Dorsolateral prefrontal cortex (tissue), 120 donors: ENCODE measurements at regions of chr2 and their contacts with region 1.

Region 1: DNA sequence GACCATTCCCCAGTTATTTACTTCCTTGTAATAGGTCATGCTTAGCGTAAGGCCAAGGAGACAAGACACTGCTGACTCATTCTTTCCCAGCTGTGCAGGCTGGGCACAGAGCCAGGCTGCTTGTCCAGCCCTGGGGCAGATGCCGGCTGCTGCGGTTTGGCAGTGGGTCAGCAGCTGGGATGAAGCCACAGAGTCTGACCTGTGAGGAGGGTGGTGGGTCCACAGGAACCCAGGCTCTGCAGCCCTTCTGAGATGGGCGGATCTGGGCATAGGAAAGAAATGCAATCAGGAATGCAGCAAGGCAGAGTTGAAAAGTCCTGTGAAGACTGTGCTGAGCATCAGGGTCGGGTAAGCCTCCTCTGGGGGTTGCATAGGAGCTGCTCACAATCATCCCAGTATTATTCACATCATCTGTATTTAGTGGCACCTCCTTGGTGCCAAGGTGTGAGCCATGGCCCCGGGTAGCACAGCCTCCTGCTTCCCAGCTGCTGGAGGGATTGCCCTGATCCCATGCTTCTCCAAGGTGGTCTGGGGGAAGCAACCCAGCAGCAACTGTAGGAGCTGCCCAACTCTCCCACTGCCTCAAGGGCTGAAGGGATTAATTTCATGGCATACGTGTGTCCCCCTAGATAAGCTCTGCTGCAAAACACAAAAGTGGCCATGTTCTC is 139.0 kb downstream of the DDX1 start:
- DNase-seq: peak; percentile 24 to 95 (median 92)
- H3K4me3 ChIP-seq: no peak overlapping the region
- H3K27ac ChIP-seq: peak overlapping the region in 15 of 59 donors; percentile 2 to 68 (median 45)
- H3K27me3 ChIP-seq: no peaks in the 10 kb centered on the region
- CTCF ChIP-seq: peak in 4 of 56 donors; percentile 13 to 27 (median 24)

Region 2: GRCh38 chr2:15799432-15799827 is 68.8 kb after region 1 on chr2:
- intact Hi-C with region 1: loop called (anchors 2 to 5 kb)
- DNase-seq: no peak
- H3K4me3 ChIP-seq: no peak overlapping the region
- H3K27ac ChIP-seq: peak overlapping the region in 27 of 59 donors; percentile 9 to 91 (median 80)
- H3K27me3 ChIP-seq: peaks cover 0 to 5% (median 0%) of the 10 kb centered on the region in 45 donors
- CTCF ChIP-seq: no peak